ENCODE measurements at regions of chr7 and their contacts with region 1.

Region 1: GRCh38 chr7:113698556-113699220 is 220.1 kb downstream of the PPP1R3A start:
- DNase-seq: peak; percentile 44
- H3K4me3 ChIP-seq: no peak overlapping the region
- H3K27ac ChIP-seq: no peak overlapping the region
- H3K4me1 ChIP-seq: no peaks in the 10 kb centered on the region
- H3K27me3 ChIP-seq: no peaks in the 10 kb centered on the region
- CTCF ChIP-seq: peak; percentile 45 to 48
- POLR2A ChIP-seq: no peak

Region 2: GRCh38 chr7:113015032-113015645 is 683.5 kb before region 1 on chr7:
- CTCF ChIA-PET with region 1: interaction called, 4 read pairs
- POLR2A ChIA-PET with region 1: no interaction called
- dilution Hi-C with region 1: no loop called
- intact Hi-C with region 1: loop called (anchors 1 kb)
- DNase-seq: peak; percentile 34
- H3K4me3 ChIP-seq: no peak overlapping the region
- H3K27ac ChIP-seq: no peak overlapping the region
- H3K4me1 ChIP-seq: no peaks in the 10 kb centered on the region
- H3K27me3 ChIP-seq: no peaks in the 10 kb centered on the region
- CTCF ChIP-seq: peak in 1 of 2 donors; percentile 7
- POLR2A ChIP-seq: no peak

Region 3: GRCh38 chr7:113159746-113160339 is 538.8 kb before region 1 on chr7:
- CTCF ChIA-PET with region 1: interaction called, 3 read pairs
- POLR2A ChIA-PET with region 1: no interaction called
- dilution Hi-C with region 1: no loop called
- intact Hi-C with region 1: loop called (anchors 10 kb)
- DNase-seq: peak; percentile 6
- H3K4me3 ChIP-seq: no peak overlapping the region
- H3K27ac ChIP-seq: no peak overlapping the region
- H3K4me1 ChIP-seq: no peaks in the 10 kb centered on the region
- H3K27me3 ChIP-seq: no peaks in the 10 kb centered on the region
- CTCF ChIP-seq: peak; percentile 51 to 65
- POLR2A ChIP-seq: no peak

Region 4: GRCh38 chr7:113404245-113404644 is 294.4 kb before region 1 on chr7:
- CTCF ChIA-PET with region 1: no interaction called
- POLR2A ChIA-PET with region 1: no interaction called
- dilution Hi-C with region 1: no loop called
- intact Hi-C with region 1: loop called (anchors 5 kb)
- DNase-seq: no peak
- H3K4me3 ChIP-seq: no peak overlapping the region
- H3K27ac ChIP-seq: no peak overlapping the region
- H3K4me1 ChIP-seq: no peaks in the 10 kb centered on the region
- H3K27me3 ChIP-seq: no peaks in the 10 kb centered on the region
- CTCF ChIP-seq: no peak
- POLR2A ChIP-seq: no peak

Region 5: DNA sequence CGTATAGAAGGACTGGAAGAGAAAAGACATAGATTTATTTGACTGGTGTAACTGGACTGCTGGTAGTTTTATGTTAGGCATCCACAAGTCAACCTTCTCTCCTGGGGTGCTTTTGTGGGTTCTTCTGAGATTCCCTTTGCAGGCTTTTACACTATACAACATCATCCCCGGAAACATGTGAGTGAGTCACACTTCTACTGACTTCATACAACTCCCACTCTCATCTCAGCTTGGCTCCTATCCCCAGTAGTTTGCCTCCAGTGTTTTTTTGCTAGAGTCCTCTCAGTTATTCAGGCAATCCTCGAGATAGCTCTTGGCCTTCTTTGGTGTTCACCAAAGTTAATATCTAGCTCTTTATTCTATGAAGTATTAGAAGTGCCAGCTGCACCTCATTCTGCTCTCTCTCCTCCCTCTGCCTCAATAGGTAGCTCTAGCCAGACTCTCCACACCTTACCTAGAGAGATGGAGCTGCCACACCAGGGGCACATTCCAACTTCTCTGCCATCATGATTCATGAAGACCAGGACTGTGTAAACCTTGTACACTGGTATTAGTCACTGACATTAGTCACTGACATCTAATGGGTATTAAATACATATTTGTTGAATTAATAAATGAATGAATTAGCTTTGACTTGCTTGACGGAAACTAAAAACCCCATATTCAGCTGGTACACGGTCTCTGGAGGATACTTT is 61.8 kb before region 1 on chr7:
- CTCF ChIA-PET with region 1: no interaction called
- POLR2A ChIA-PET with region 1: no interaction called
- dilution Hi-C with region 1: no loop called
- intact Hi-C with region 1: no loop called
- DNase-seq: no peak
- H3K4me3 ChIP-seq: no peak overlapping the region
- H3K27ac ChIP-seq: no peak overlapping the region
- H3K4me1 ChIP-seq: no peaks in the 10 kb centered on the region
- H3K27me3 ChIP-seq: no peaks in the 10 kb centered on the region
- CTCF ChIP-seq: no peak
- POLR2A ChIP-seq: no peak

Region 6: GRCh38 chr7:113710310-113711106 is 11.8 kb after region 1 on chr7:
- CTCF ChIA-PET with region 1: interaction called, 14 read pairs
- POLR2A ChIA-PET with region 1: no interaction called
- dilution Hi-C with region 1: no loop called
- intact Hi-C with region 1: no loop called
- DNase-seq: peak; percentile 84
- H3K4me3 ChIP-seq: no peak overlapping the region
- H3K27ac ChIP-seq: no peak overlapping the region
- H3K4me1 ChIP-seq: no peaks in the 10 kb centered on the region
- H3K27me3 ChIP-seq: peaks cover 2 to 7% of the 10 kb centered on the region in 2 experiments
- CTCF ChIP-seq: peak; percentile 79 to 86
- POLR2A ChIP-seq: no peak